B cell (primary cell): ENCODE measurements at regions of chr1 and their contacts with region 1.

Region 1: DNA sequence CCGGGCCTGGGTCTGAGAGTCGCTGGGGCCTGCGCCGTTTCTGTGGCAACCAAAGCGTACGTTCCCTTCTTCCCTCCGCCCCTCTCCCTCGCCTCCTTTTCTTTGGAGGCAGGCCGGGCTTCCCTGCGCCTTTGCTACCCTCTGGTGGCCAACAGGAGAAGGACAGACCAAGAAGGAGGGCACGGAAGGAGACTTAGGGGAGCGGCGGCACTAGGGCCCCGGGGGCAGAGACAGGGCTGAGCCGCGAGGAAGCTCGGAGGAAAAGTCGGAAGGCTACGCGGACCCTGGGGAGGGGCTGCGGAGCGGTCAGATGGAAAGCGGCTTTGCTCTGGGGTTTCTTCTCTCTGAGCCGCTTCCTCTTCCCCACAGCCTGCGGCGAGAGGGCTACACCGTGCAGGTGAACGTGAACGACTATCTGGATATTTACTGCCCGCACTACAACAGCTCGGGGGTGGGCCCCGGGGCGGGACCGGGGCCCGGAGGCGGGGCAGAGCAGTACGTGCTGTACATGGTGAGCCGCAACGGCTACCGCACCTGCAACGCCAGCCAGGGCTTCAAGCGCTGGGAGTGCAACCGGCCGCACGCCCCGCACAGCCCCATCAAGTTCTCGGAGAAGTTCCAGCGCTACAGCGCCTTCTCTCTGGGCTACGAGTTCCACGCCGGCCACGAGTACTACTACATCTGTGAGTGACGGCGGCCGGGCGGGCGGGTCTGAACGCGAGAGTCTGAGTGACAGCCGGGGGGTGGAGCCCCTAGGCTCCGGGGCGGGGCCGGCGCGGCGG is 6.3 kb downstream of the EFNA3 start:
- DNase-seq: peak; percentile 97
- ATAC-seq: peak; percentile 73
- H3K4me3 ChIP-seq: peak overlapping the region; percentile 48 to 80 (median 76)
- H3K4me3 Mint-ChIP-seq: peak overlapping the region; percentile 91
- H3K27ac ChIP-seq: peak overlapping the region; percentile 77 to 79
- H3K27ac Mint-ChIP-seq: peak overlapping the region; percentile 93
- H3K4me1 ChIP-seq: peaks cover 59 to 62% of the 10 kb centered on the region in 2 donors
- H3K4me1 Mint-ChIP-seq: peaks cover 48% of the 10 kb centered on the region
- H3K27me3 ChIP-seq: peaks cover 0 to 46% (median 38%) of the 10 kb centered on the region in 4 experiments
- H3K27me3 Mint-ChIP-seq: peaks cover 30% of the 10 kb centered on the region
- CTCF ChIP-seq: peak; percentile 87

Region 2: DNA sequence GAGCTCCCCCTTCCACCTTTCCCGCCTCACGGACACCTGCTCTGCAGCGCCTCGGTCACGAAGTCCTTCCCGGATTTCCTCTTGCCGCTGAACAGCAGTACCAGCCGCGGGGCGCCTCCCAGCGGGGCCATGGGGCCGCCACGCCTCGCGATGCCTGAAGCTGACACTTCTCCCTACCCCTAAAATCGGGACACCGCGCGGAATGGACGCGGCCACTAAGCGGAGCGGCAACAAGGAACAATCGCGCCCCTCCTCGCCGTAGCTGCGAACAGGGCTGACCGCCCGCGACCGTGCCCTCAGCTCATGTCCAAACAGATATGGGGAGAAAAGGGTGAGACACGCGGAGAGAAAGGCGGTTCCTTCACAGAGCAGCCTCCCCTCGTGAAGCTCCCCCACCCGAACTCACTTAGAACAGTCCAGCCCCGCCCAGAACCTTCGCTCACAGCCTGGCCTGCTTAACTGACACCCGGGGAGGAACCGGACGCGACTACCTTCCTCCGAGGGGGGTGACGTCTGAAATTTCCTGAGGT is 148.3 kb before region 1 on chr1 and contains the start of gene PMVK:
- CTCF ChIA-PET with region 1: interaction called, 13 read pairs
- POLR2A ChIA-PET with region 1: no interaction called
- intact Hi-C with region 1: no loop called
- DNase-seq: peak; percentile 99
- ATAC-seq: peak; percentile 89
- H3K4me3 ChIP-seq: peak within 1 kb of the TSS; percentile 76 to 90 (median 80)
- H3K4me3 Mint-ChIP-seq: peak within 1 kb of the TSS; percentile 97
- H3K27ac ChIP-seq: peak within 1 kb of the TSS; percentile 98
- H3K27ac Mint-ChIP-seq: peak within 1 kb of the TSS; percentile 100
- H3K4me1 ChIP-seq: peaks cover 32 to 50% of the 10 kb centered on the region in 2 donors
- H3K4me1 Mint-ChIP-seq: peaks cover 51% of the 10 kb centered on the region
- H3K27me3 ChIP-seq: no peaks in the 10 kb centered on the region
- H3K27me3 Mint-ChIP-seq: no peaks in the 10 kb centered on the region
- CTCF ChIP-seq: peak; percentile 40
- total RNA-seq, gene PMVK: 15.0 TPM in 2 replicates

Region 3: DNA sequence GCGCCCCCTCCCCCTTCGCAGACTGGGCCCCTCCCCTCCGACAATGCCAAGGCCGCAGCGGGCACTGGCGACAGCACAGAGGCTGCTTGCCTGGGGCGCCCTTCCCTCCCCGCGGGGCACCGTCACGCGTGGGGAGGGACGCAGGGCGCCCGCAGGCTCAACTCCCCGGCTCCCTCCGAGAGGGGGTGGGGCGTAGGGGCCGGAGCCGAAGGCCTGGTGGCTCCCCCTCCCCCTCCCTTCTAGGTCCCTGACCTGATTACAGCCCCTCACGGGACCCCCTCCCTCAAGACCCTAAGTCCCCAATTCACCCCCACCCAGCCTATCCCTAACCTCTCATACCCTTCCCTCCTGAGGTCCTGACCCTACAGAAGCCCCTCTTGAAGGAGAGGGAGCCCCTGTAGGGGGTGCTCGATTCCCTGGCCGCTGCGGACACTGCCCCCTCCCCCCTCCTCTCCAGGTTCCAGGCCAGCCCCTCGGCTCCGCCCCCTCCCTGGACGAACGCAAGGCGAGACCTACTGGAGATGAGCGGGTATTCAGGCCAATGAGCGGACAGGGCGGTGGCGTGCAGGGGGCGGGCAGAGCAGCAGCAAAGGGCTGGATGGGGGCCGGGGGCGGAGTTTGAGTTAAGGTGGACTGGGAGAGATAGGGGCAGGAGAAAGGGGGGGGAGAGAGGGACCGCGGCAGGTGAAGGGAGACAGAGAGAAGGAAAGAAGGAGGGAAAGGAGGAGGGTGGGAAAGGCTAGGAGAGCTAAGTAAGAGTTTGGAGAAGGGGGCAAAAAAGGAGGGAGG is 83.0 kb before region 1 on chr1:
- CTCF ChIA-PET with region 1: interaction called, 4 read pairs
- POLR2A ChIA-PET with region 1: no interaction called
- intact Hi-C with region 1: loop called (anchors 1 kb)
- DNase-seq: peak; percentile 98
- ATAC-seq: peak; percentile 81
- H3K4me3 ChIP-seq: peak overlapping the region; percentile 74 to 95 (median 86)
- H3K4me3 Mint-ChIP-seq: peak overlapping the region; percentile 90
- H3K27ac ChIP-seq: peak overlapping the region; percentile 73 to 80
- H3K27ac Mint-ChIP-seq: peak overlapping the region; percentile 96
- H3K4me1 ChIP-seq: peaks cover 41 to 50% of the 10 kb centered on the region in 2 donors
- H3K4me1 Mint-ChIP-seq: peaks cover 51% of the 10 kb centered on the region
- H3K27me3 ChIP-seq: no peaks in the 10 kb centered on the region
- H3K27me3 Mint-ChIP-seq: no peaks in the 10 kb centered on the region
- CTCF ChIP-seq: no peak

Region 4: DNA sequence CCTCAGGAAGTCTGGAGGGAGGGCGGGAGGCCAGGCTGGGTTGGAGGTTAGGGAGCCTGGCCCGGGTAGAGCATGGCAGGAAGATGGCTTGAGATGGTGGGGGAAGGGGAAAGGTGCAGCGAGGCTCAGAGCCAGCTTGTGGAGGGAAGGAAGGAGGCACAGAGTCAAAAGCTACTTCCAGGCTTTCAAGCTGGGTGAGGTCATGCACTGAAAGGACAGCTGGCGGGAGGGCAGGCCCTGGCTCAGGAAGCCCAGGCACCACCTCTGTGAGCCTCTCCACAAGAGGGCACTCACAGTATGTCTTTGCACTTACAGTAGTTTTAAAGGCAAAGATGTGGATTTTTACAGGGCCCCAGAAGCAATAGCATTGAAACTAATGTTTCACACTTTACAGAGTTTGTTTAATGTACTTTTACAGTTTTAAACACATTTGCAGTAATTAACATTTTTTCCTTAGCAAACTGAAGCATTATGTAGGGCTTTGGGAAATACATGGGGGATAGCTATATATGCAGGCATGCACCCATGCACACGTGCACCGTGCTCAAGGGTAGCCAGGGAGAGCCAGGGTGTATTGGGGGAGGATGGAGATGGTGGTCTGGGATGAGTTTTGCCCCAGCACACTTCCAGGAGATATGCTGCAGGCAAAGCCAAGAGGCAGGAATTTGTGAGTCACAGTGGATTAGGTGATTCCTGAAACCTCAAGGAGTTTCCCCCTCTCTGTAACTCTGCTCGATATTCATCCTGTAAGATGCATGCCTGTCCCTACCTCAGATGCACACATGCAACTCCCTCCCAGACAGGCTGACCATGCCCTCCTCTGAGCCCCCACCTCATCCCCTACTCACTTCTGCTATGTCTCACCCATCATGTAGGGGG is 39.9 kb before region 1 on chr1:
- CTCF ChIA-PET with region 1: interaction called, 77 read pairs
- POLR2A ChIA-PET with region 1: no interaction called
- intact Hi-C with region 1: loop called (anchors 1 kb)
- DNase-seq: peak; percentile 76
- ATAC-seq: peak; percentile 92
- H3K4me3 ChIP-seq: no peak overlapping the region
- H3K4me3 Mint-ChIP-seq: peak overlapping the region; percentile 30
- H3K27ac ChIP-seq: no peak overlapping the region
- H3K27ac Mint-ChIP-seq: peak overlapping the region; percentile 54
- H3K4me1 ChIP-seq: peaks cover 0 to under 1% of the 10 kb centered on the region in 2 donors
- H3K4me1 Mint-ChIP-seq: peaks cover 10% of the 10 kb centered on the region
- H3K27me3 ChIP-seq: no peaks in the 10 kb centered on the region
- H3K27me3 Mint-ChIP-seq: peaks cover 3% of the 10 kb centered on the region
- CTCF ChIP-seq: peak; percentile 63

Region 5: GRCh38 chr1:155070721-155071569 is 14.0 kb before region 1 on chr1:
- CTCF ChIA-PET with region 1: interaction called, 184 read pairs
- POLR2A ChIA-PET with region 1: interaction called, 7 read pairs
- intact Hi-C with region 1: no loop called
- DNase-seq: peak; percentile 91
- ATAC-seq: peak; percentile 98
- H3K4me3 ChIP-seq: peak overlapping the region; percentile 21 to 54 (median 34)
- H3K4me3 Mint-ChIP-seq: peak overlapping the region; percentile 51
- H3K27ac ChIP-seq: peak overlapping the region; percentile 32 to 38
- H3K27ac Mint-ChIP-seq: peak overlapping the region; percentile 48
- H3K4me1 ChIP-seq: peaks cover 25 to 45% of the 10 kb centered on the region in 2 donors
- H3K4me1 Mint-ChIP-seq: peaks cover 48% of the 10 kb centered on the region
- H3K27me3 ChIP-seq: no peaks in the 10 kb centered on the region
- H3K27me3 Mint-ChIP-seq: no peaks in the 10 kb centered on the region
- CTCF ChIP-seq: peak; percentile 75

Region 6: GRCh38 chr1:155172732-155173477 is 88.0 kb after region 1 on chr1 and contains the start of gene KRTCAP2:
- CTCF ChIA-PET with region 1: interaction called, 307 read pairs
- POLR2A ChIA-PET with region 1: interaction called, 6 read pairs
- intact Hi-C with region 1: loop called (anchors 2 kb)
- DNase-seq: peak; percentile 95
- ATAC-seq: peak; percentile 85
- H3K4me3 ChIP-seq: peak within 1 kb of the TSS; percentile 27 to 95 (median 73)
- H3K4me3 Mint-ChIP-seq: peak within 1 kb of the TSS; percentile 97
- H3K27ac ChIP-seq: peak within 1 kb of the TSS; percentile 89 to 92
- H3K27ac Mint-ChIP-seq: peak within 1 kb of the TSS; percentile 98
- H3K4me1 ChIP-seq: peaks cover 24 to 35% of the 10 kb centered on the region in 2 donors
- H3K4me1 Mint-ChIP-seq: peaks cover 40% of the 10 kb centered on the region
- H3K27me3 ChIP-seq: no peaks in the 10 kb centered on the region
- H3K27me3 Mint-ChIP-seq: no peaks in the 10 kb centered on the region
- CTCF ChIP-seq: peak; percentile 89
- total RNA-seq, gene KRTCAP2: 136 and 151 TPM in 2 replicates

Region 7: GRCh38 chr1:155277070-155277895 is 192.4 kb after region 1 on chr1 and contains the start of gene HCN3:
- CTCF ChIA-PET with region 1: no interaction called
- POLR2A ChIA-PET with region 1: no interaction called
- intact Hi-C with region 1: loop called (anchors 5 kb)
- DNase-seq: peak; percentile 95
- ATAC-seq: peak; percentile 75
- H3K4me3 ChIP-seq: peak within 1 kb of the TSS; percentile 49 to 64 (median 59)
- H3K4me3 Mint-ChIP-seq: peak within 1 kb of the TSS; percentile 83
- H3K27ac ChIP-seq: peak within 1 kb of the TSS in 1 of 2 donors; percentile 33
- H3K27ac Mint-ChIP-seq: peak within 1 kb of the TSS; percentile 41
- H3K4me1 ChIP-seq: peaks cover 25 to 36% of the 10 kb centered on the region in 2 donors
- H3K4me1 Mint-ChIP-seq: peaks cover 35% of the 10 kb centered on the region
- H3K27me3 ChIP-seq: no peaks in the 10 kb centered on the region
- H3K27me3 Mint-ChIP-seq: no peaks in the 10 kb centered on the region
- CTCF ChIP-seq: peak; percentile 76
- total RNA-seq, gene HCN3: 9.0 and 9.2 TPM in 2 replicates